ENCODE measurements at regions of chr1 and their contacts with region 1.

Region 1: DNA sequence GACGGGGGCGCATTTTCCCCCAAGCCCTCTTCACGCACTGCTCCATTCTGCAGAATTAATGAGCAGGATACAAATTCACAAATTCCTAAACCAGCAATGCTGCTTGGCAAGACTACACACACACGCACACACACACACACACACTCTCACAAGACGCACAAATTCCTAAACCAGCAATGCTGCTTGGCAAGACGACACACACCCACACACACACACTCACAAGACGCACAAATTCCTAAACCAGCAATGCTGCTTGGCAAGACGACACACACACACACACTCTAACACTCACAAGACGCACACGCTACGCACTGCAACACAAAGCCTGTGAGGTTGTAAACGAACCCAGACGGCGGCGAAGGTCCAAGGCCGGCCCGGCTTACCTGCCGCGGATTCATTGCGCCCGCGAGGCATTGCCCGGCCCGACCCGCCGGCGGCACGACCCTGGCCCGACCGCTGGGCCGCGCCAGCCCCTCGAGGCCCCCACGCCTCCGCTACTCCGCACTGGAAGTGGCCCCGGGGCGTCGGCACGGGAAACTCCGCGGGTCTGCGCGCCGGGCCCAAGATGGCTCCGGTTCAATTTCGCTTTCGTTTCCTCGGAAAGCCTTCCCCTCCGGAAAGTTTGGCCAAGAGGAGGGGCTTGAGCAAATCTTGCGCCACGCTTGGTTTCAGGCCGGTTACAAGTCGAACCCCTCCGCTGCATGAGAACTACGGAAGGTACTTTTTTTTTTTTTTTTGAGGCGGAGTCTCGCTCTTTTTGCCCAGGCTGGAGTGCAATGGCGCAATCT is at the start of gene ADAR:
- DNase-seq: peak; percentile 98
- H3K4me3 ChIP-seq: peak within 1 kb of the TSS; percentile 64 to 98 (median 84)
- H3K27ac ChIP-seq: peak within 1 kb of the TSS; percentile 93 to 99 (median 96)
- H3K4me1 ChIP-seq: peaks cover 0 to 58% (median 50%) of the 10 kb centered on the region in 4 donors
- H3K27me3 ChIP-seq: no peaks in the 10 kb centered on the region
- CTCF ChIP-seq: no peak
- EP300 ChIP-seq: peak in 1 of 4 donors; percentile 10
- POLR2A ChIP-seq: peak; percentile 15 to 17
- total RNA-seq, gene ADAR: 59.4 to 103 (median 69.7) TPM

Region 2: DNA sequence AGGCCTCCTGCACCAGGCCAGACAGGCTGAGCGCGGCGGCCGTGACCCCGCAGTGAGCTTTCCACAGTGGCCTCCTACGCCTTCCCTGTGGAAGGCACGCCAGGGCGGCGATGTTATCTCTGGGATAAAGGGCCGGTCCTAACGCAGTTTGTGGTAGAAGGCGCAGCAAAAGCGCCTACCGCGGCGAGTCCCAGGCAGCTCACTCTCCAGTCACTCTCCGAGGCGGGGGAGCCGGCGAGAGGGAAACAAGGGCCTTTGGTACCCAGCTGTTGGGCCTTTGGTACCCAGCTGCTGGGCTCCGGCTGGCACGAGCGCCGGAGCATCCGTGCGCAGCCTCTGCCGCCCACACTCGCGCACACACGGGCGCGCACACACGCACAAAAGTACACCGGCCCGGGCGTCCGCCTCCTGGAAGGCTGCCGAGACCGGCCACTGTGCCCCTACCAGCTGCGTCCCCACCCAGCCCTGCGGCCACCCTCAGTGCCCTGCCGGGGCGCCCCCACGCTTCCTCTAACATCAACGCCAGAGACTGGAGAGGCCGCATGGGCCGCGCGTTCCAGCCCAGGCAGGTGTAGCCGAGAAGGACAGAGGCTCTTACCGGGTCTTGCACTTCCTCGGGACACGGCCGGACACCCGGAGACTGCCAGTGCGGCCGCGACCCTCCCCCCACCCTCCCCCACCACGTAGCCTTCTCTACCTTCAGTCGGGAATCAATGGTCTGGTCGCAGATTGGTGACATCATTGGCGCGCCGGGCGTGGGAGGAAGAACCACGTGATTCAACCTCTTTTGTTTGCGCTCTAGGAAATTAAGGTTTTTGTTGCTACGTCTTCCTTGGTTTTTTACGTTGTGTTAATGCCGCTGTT is 19.7 kb after region 1 on chr1:
- intact Hi-C with region 1: loop called (anchors 1 kb)
- DNase-seq: peak; percentile 93
- H3K4me3 ChIP-seq: peak overlapping the region; percentile 60 to 96 (median 82)
- H3K27ac ChIP-seq: peak overlapping the region; percentile 84 to 93 (median 92)
- H3K4me1 ChIP-seq: peaks cover 0 to 22% (median 12%) of the 10 kb centered on the region in 4 donors
- H3K27me3 ChIP-seq: no peaks in the 10 kb centered on the region
- CTCF ChIP-seq: no peak
- EP300 ChIP-seq: no peak
- POLR2A ChIP-seq: no peak

Measured in sigmoid colon (tissue), 7 donors.